ENCODE measurements at regions of chr3 and their contacts with region 1.

Region 1: DNA sequence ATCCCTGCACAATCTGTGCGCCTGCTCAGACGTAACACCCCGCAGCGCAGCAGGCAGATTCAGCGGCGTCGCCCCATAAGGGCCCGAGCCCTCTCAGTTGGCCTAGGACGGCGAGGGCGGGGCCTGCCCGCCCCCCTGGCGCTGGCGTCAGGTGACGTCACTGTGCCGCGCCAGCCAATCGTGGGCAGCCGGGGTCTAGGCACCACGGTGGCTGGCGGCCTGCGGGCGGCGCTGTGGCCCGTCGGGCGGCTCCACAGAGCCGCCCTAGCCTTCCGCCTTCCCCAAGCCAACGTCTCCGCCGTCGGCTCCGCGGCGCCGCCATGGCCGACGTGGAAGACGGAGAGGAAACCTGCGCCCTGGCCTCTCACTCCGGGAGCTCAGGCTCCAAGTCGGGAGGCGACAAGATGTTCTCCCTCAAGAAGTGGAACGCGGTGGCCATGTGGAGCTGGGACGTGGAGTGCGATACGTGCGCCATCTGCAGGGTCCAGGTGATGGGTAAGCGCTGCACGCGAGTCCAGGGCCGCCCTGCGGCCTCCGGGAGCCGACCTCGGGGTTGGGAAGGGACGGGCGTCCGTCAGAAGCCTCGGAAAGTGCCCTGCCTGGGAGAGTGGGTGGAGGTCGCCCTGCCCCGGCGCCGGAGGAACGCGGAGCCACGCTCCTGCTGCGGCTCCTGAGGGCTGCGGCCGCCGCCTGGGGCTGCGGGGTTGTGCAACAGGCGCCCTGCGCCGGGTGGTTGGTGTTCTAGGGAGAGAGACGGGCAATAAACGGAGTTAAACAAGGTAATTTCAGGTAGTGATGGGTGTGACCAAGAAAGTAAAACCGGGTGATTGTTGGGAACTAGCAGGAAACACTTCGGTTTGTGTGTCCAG is at the start of gene RNF7:
- DNase-seq: peak; percentile 90
- ATAC-seq: peak; percentile 93
- H3K4me3 ChIP-seq: peak within 1 kb of the TSS; percentile 73 to 91
- H3K27ac ChIP-seq: peak within 1 kb of the TSS; percentile 84
- H3K4me1 ChIP-seq: peaks cover 9 to 11% of the 10 kb centered on the region in 2 experiments
- H3K27me3 ChIP-seq: no peaks in the 10 kb centered on the region
- CTCF ChIP-seq: peak; percentile 71 to 92 (median 89)
- POLR2A ChIP-seq: peak; percentile 82
- RAD21 ChIP-seq: peak; percentile 79
- total RNA-seq, gene RNF7: 82.3 TPM

Region 2: DNA sequence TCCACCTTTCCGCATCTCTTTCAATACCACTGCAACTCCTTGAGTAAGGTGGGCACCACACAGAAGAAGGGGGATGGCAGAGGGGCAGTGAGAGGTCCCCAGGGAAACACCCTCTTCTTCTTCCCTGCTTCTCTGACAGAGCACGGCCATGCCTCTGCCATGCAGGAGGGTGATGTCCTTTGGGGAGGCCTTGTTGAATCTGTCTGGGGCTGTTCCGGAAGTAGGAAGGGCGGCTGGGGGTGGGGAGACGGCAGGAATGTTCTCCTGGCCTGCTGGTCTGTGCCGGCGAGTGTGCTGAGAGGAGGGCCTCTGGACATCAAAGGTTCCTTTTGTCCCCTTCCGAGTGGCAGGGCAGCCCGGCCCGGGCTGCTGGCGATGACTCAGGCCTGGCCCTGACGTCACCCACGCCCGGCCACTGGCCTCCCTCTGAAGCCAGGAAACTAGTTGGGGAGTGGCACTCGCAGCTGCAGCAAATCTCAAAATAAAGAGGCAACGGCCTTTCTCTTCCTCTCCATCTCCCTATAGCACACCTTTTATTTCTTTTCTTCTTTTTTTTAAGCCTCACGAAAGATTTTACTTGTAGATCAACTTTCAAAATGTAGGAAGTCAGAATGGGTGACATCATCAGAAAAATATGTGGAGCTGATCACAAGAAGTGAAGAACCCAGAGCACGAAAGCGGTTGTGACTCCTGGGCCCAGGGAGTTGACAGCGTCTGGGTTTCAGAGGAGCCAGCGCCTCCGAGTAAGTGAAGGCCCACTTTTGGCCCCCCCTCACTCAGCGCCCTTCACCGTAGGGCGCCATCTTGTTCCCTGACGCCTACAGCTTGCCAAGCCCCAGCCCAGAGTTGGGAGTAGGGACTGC is 370.0 kb before region 1 on chr3 and contains the start of gene ZBTB38:
- CTCF ChIA-PET with region 1: no interaction called
- POLR2A ChIA-PET with region 1: no interaction called
- RAD21 ChIA-PET with region 1: no interaction called
- intact Hi-C with region 1: loop called (anchors 5 kb)
- DNase-seq: peak; percentile 95
- ATAC-seq: peak; percentile 89
- H3K4me3 ChIP-seq: peak within 1 kb of the TSS; percentile 33 to 45
- H3K27ac ChIP-seq: peak within 1 kb of the TSS; percentile 89
- H3K4me1 ChIP-seq: peaks cover 42 to 52% of the 10 kb centered on the region in 2 experiments
- H3K27me3 ChIP-seq: no peaks in the 10 kb centered on the region
- CTCF ChIP-seq: no peak
- POLR2A ChIP-seq: peak; percentile 26
- RAD21 ChIP-seq: no peak
- total RNA-seq, gene ZBTB38: 33.5 TPM

Region 3: DNA sequence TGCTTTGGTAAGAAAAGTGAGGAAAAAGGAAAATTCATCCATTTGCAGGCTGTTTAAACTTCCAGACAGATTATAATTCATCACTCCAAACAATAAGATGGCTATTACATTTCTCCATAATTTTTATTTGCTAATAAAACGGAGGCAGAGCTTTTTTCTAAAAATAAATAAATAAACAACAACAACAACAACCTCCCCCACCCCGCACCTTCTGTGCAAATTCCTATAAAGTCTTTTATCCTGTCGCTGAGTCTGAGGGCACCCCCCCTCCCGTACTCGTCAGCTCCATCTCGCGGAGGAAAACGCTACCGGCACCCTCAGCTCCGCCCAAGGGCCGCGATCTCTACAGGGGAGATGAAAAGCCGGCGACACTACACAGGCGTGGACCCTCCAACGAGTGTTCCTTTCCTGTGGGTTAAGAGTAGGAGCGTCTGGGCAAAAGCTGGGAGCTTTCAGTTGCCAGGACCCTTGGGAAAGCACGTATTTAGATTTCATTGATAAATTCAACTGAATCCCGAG is 137.2 kb after region 1 on chr3:
- CTCF ChIA-PET with region 1: interaction called, 6 read pairs
- POLR2A ChIA-PET with region 1: no interaction called
- RAD21 ChIA-PET with region 1: interaction called, 4 to 5 read pairs
- intact Hi-C with region 1: loop called (anchors 1 kb)
- DNase-seq: peak; percentile 69
- ATAC-seq: peak; percentile 80
- H3K4me3 ChIP-seq: peak overlapping the region; percentile 67 to 96
- H3K27ac ChIP-seq: peak overlapping the region; percentile 91
- H3K4me1 ChIP-seq: peaks cover 12 to 28% of the 10 kb centered on the region in 2 experiments
- H3K27me3 ChIP-seq: no peaks in the 10 kb centered on the region
- CTCF ChIP-seq: peak; percentile 77 to 89 (median 80)
- POLR2A ChIP-seq: no peak
- RAD21 ChIP-seq: peak; percentile 67

Region 4: GRCh38 chr3:141913150-141913811 is 175.0 kb after region 1 on chr3:
- CTCF ChIA-PET with region 1: no interaction called
- POLR2A ChIA-PET with region 1: no interaction called
- RAD21 ChIA-PET with region 1: no interaction called
- intact Hi-C with region 1: loop called (anchors 1 kb)
- DNase-seq: peak; percentile 34
- ATAC-seq: peak; percentile 75
- H3K4me3 ChIP-seq: no peak overlapping the region
- H3K27ac ChIP-seq: no peak overlapping the region
- H3K4me1 ChIP-seq: no peaks in the 10 kb centered on the region
- H3K27me3 ChIP-seq: no peaks in the 10 kb centered on the region
- CTCF ChIP-seq: peak; percentile 57 to 75 (median 67); a peak in 5 of 6 replicates
- POLR2A ChIP-seq: no peak
- RAD21 ChIP-seq: peak; percentile 74

Region 5: DNA sequence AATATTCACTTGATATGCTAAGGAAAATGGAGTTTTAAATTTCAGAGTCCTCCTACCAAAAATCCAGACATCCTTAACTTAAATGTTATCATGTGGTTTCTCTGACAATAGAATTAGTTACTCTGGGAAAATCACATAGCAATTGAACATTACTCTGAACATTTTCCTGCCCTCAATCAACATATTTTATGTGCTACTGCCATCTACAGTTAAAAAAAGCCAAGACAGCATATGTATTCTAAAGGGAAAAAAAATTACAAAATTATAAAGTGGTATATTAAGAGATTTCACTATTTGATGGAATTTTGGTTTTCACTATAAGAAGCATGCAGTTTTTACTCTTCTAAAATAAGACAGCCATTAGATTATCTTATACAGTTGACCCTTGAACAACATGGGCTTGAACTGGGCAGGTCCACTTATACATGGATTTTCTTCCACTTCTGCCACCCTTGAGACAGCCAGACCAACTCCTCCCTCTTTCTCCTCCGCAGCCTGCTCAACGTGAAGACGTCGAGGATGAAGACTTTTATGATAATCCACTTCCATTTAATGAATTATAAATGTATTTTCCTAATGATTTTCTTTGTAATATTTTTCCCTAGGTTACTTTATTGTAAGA is 260.5 kb after region 1 on chr3:
- CTCF ChIA-PET with region 1: no interaction called
- POLR2A ChIA-PET with region 1: no interaction called
- RAD21 ChIA-PET with region 1: no interaction called
- intact Hi-C with region 1: loop called (anchors 5 kb)
- DNase-seq: no peak
- ATAC-seq: peak; percentile 67
- H3K4me3 ChIP-seq: no peak overlapping the region
- H3K27ac ChIP-seq: no peak overlapping the region
- H3K4me1 ChIP-seq: peaks cover 7 to 14% of the 10 kb centered on the region in 2 experiments; a peak in 3 of 4 replicates
- H3K27me3 ChIP-seq: no peaks in the 10 kb centered on the region
- CTCF ChIP-seq: peak in 2 of 3 experiments; percentile 41 to 59; a peak in 3 of 6 replicates
- POLR2A ChIP-seq: no peak
- RAD21 ChIP-seq: peak; percentile 69

Region 6: GRCh38 chr3:142481196-142481595 is 742.9 kb after region 1 on chr3:
- CTCF ChIA-PET with region 1: no interaction called
- POLR2A ChIA-PET with region 1: no interaction called
- RAD21 ChIA-PET with region 1: no interaction called
- intact Hi-C with region 1: no loop called
- DNase-seq: no peak
- ATAC-seq: no peak
- H3K4me3 ChIP-seq: no peak overlapping the region
- H3K27ac ChIP-seq: no peak overlapping the region
- H3K4me1 ChIP-seq: no peaks in the 10 kb centered on the region
- H3K27me3 ChIP-seq: no peaks in the 10 kb centered on the region
- CTCF ChIP-seq: no peak
- POLR2A ChIP-seq: no peak
- RAD21 ChIP-seq: no peak

Region 7: GRCh38 chr3:143109861-143110260 is 1371.6 kb after region 1 on chr3:
- CTCF ChIA-PET with region 1: no interaction called
- POLR2A ChIA-PET with region 1: no interaction called
- RAD21 ChIA-PET with region 1: no interaction called
- intact Hi-C with region 1: no loop called
- DNase-seq: no peak
- ATAC-seq: no peak
- H3K4me3 ChIP-seq: no peak overlapping the region
- H3K27ac ChIP-seq: no peak overlapping the region
- H3K4me1 ChIP-seq: no peaks in the 10 kb centered on the region
- H3K27me3 ChIP-seq: no peaks in the 10 kb centered on the region
- CTCF ChIP-seq: no peak
- POLR2A ChIP-seq: no peak
- RAD21 ChIP-seq: no peak